Right ventricle myocardium inferior (tissue), 1 donor: ENCODE measurements at regions of chr20 and their contacts with region 1.

Region 1: DNA sequence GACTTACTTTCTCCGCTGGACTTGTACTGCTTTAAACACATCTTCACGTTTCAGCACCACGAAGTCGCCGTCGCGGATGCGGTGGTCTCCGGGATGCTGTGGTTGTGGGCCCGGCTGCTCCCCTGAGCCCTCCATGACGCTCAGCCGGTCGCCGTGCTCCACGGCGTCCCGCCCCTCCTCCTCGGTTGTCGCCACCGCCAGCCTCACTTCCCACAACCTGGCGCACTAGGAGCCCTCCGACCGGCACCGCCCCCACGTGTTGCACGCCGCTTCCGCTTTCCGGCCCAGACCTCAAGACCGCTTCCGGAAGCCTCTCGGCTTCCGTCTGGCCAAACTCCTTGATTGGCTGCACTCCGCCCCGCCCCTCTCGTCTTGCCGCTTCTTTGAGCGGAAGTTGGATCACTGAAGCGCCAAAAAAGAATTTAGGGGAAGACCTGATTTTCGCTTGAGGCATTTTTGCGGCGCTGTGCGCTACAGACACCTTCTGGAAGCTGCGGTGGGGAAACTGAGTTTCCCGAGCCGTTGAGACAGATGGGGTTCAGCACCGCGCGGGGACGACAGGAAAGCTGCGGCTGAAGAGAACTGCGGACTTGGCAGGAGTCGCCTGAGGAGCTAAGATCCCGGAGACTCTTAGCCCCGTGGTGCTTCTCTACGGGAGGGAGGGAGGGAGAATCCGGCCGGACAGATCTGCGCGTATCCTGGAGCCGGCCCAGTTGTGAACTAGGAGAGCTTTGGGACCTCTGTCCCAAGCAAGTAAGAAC is at the starts of genes MCM8 and TRMT6:
- DNase-seq: peak; percentile 99
- ATAC-seq: peak; percentile 99
- total RNA-seq, gene MCM8: 6.4 TPM
- total RNA-seq, gene TRMT6: 6.1 TPM

Region 2: GRCh38 chr20:5529331-5530148 is 420.9 kb before region 1 on chr20:
- intact Hi-C with region 1: loop called (anchors 10 kb)
- DNase-seq: peak; percentile 93
- ATAC-seq: peak; percentile 87